Tibial artery (tissue), 4 donors: ENCODE measurements at regions of chr2 and their contacts with region 1.

Region 1: DNA sequence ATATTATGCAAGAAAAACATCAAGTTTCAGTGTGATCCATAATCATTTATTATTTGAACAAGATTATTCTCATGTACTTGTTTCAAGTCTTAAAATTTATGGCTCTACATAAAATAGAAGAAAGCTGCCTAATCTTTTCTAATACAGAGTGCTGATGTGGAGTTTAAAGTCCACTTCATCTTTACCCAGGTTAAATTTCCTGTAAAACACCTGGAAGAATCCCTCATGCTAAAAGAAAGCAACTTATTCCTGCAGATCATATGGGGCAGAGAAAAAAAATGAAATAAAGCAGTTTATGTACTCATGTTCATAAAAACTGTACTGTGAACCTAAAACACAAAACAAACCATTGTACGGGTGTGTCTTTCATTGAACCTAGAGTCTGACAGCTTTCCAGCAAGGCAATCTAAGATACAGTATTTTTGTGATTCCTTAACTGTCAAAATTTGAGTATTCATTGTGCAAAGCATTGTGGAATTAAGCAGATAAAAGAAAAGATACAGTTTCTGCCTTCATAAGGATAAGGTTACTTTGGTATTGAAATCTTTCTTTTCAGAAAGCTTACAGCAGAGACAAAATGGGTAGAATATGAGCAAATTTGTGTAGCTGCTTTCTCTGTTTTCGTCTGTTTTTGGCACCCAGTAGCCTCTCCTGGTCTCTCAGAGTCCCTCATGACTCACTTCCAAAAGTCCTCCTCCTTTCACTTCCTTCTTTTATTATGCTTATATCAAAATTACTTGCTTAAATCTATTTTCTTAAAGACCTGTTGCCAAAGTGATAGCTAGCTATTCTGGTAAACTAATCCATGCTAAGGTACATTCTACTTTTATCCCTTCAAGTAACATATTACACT is 26.9 kb upstream of the GLS start:
- DNase-seq: no peak
- H3K4me3 ChIP-seq: no peak overlapping the region
- H3K27ac ChIP-seq: peak overlapping the region; percentile 30 to 37
- H3K4me1 ChIP-seq: peaks cover 0 to 51% (median 13%) of the 10 kb centered on the region in 4 donors
- H3K27me3 ChIP-seq: no peaks in the 10 kb centered on the region
- CTCF ChIP-seq: no peak

Region 2: DNA sequence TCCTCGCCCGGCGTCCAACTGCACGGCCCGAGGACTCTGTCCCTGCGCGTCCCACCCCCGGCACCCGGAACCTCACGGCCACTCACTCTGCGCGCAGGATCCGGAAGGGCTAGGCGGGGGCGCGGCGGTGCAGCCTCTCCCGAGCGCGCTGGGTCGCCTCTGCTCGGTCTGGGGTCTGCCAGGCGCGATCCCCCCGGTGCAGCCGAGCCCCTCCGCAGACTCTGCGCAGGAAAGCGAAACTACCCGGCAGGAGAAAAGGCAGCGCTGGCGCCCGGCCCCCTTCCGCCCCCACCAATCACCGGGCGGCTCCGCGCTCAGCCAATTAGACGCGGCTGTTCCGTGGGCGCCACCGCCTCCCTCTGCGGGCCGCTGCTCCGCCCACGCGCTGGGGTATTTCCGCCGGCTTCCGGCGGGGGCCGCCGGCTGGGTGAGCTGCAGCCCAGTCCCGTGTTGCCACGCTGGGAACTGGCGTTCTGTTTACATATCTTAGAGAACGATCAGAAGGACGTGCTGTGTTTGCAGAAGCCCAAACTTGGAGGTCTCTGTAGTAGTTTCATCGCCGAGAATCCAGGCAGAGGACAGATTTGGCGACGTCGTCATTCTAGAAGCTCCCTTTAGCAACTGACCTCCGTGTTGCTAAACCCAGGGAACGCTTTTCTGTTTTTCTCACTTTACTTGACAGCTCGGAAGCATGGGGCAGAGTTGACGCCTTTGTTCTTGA is 160.3 kb after region 1 on chr2 and contains the start of gene STAT1:
- intact Hi-C with region 1: loop called (anchors 5 kb)
- DNase-seq: peak; percentile 89 to 95
- H3K4me3 ChIP-seq: peak within 1 kb of the TSS; percentile 73
- H3K27ac ChIP-seq: peak within 1 kb of the TSS; percentile 83 to 87
- H3K4me1 ChIP-seq: peaks cover 0 to 33% (median 16%) of the 10 kb centered on the region in 4 donors
- H3K27me3 ChIP-seq: no peaks in the 10 kb centered on the region
- CTCF ChIP-seq: peak; percentile 10 to 52